B cell (primary cell): ENCODE measurements at regions of chr17 and their contacts with region 1.

Region 1: DNA sequence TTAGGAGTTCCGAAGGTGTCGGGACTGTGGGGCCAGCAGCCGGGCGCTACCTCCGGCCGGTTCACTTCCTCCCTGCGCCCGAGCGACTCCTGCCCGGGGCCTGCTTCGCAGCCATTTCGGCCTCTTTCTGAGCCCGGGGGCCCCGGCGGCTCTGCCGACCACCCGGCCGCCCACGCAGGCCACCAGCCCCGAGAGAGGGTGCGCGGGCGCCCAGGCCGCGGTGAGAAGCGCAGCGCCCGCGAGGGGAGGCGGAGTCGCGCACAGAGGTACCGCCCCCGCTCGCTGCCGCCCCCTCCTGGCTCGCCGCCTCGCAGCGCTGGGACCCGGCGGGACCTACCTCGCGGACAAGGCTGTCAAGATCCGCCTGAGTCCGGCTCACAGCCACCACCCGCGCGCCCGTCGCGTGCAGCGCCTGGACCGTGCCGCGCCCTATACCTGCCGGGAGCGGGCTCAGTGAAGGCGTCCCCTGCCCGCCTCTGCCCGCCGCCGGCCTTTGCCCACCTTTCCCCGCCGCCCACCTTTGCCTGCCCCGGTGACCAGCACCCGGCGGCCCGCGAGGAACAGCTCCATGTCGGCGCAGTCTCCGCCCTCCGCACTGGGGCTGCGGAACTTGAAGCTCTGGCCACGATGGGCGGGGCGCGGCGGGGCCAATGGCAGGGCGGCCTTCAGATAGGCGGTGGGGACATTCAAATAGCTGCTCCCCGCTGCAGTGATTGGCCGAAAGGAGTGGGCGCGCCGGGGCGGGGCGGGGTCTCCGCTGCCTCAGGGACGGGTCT is at the start of gene DCXR:
- DNase-seq: peak; percentile 98
- ATAC-seq: peak; percentile 91
- H3K4me3 ChIP-seq: peak within 1 kb of the TSS; percentile 34 to 76 (median 72)
- H3K4me3 Mint-ChIP-seq: peak within 1 kb of the TSS; percentile 90
- H3K27ac ChIP-seq: peak within 1 kb of the TSS; percentile 59 to 84
- H3K27ac Mint-ChIP-seq: peak within 1 kb of the TSS; percentile 99
- H3K4me1 ChIP-seq: peaks cover 18 to 20% of the 10 kb centered on the region in 2 donors
- H3K4me1 Mint-ChIP-seq: peaks cover 24% of the 10 kb centered on the region
- H3K27me3 ChIP-seq: peaks cover 0 to 4% (median 1%) of the 10 kb centered on the region in 4 experiments
- H3K27me3 Mint-ChIP-seq: no peaks in the 10 kb centered on the region
- CTCF ChIP-seq: peak; percentile 87
- total RNA-seq, gene DCXR: 63.9 and 70.7 TPM in 2 replicates

Region 2: DNA sequence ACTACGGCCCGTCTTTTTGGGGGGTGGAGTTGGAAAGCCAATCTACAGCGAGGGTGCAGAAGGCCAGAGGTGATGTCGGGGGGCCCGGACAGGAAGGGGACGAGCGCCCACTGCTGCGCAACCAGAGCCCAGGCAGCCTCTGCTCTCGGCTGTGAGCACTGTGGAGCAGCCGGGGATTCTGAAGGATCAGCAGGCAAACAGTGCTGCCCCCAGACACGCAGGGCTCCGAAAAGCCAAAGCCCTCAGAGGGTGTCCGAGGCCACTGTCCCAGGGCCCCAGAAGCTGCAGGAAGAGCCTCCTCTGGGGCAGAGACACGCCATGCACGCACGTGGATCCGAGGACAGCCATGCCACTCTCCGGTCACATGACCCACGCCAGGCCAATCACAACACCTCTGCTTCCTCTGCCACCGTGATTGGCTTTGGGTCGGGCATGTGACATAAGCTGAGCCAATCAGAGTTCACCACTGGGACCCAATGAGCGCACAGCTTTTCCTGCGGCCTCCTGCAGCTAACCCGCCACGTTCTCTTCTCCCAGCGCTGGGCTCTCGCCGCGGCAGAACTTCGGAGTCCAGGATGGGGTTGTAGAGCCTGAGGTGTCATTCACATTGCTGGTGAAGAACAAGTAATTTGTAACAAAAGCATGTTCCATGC is 565.4 kb before region 1 on chr17:
- CTCF ChIA-PET with region 1: no interaction called
- POLR2A ChIA-PET with region 1: no interaction called
- intact Hi-C with region 1: no loop called
- DNase-seq: no peak
- ATAC-seq: no peak
- H3K4me3 ChIP-seq: no peak overlapping the region
- H3K4me3 Mint-ChIP-seq: no peak overlapping the region
- H3K27ac ChIP-seq: no peak overlapping the region
- H3K27ac Mint-ChIP-seq: no peak overlapping the region
- H3K4me1 ChIP-seq: no peaks in the 10 kb centered on the region
- H3K4me1 Mint-ChIP-seq: no peaks in the 10 kb centered on the region
- H3K27me3 ChIP-seq: no peaks in the 10 kb centered on the region
- H3K27me3 Mint-ChIP-seq: no peaks in the 10 kb centered on the region
- CTCF ChIP-seq: no peak

Region 3: GRCh38 chr17:81977211-81978027 is 59.9 kb before region 1 on chr17 and contains the start of gene ASPSCR1:
- CTCF ChIA-PET with region 1: interaction called, 3 read pairs
- POLR2A ChIA-PET with region 1: interaction called, 3 read pairs
- intact Hi-C with region 1: loop called (anchors 1 kb)
- DNase-seq: peak; percentile 96
- ATAC-seq: peak; percentile 92
- H3K4me3 ChIP-seq: peak within 1 kb of the TSS; percentile 38 to 96 (median 79)
- H3K4me3 Mint-ChIP-seq: peak within 1 kb of the TSS; percentile 98
- H3K27ac ChIP-seq: peak within 1 kb of the TSS; percentile 63 to 91
- H3K27ac Mint-ChIP-seq: peak within 1 kb of the TSS; percentile 99
- H3K4me1 ChIP-seq: peaks cover 19 to 26% of the 10 kb centered on the region in 2 donors
- H3K4me1 Mint-ChIP-seq: peaks cover 29% of the 10 kb centered on the region
- H3K27me3 ChIP-seq: no peaks in the 10 kb centered on the region
- H3K27me3 Mint-ChIP-seq: peaks cover 3% of the 10 kb centered on the region
- CTCF ChIP-seq: no peak
- total RNA-seq, gene ASPSCR1: 46.7 and 50.4 TPM in 2 replicates

Region 4: DNA sequence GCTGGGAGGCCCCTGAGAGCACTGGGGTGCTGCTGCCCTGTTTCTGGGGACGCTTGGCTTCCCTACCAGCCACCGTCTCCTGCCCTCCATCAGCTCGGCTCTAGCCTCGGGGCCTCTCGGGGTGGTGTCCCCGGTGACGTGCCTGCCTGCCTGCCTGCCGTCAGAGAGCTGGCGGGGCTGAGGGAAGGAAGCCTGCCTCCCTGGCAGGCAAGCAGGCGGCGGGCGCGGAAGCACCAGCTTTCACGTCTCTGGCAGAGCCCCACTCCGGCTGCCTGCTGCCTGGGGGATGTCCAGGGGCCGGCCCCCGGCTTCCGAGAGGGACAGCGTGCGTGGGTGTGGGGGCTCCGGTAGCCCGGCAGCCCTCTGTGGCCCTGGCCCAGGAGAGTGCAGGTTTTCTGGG is 24.0 kb before region 1 on chr17:
- CTCF ChIA-PET with region 1: no interaction called
- POLR2A ChIA-PET with region 1: no interaction called
- intact Hi-C with region 1: no loop called
- DNase-seq: no peak
- ATAC-seq: no peak
- H3K4me3 ChIP-seq: no peak overlapping the region
- H3K4me3 Mint-ChIP-seq: no peak overlapping the region
- H3K27ac ChIP-seq: no peak overlapping the region
- H3K27ac Mint-ChIP-seq: no peak overlapping the region
- H3K4me1 ChIP-seq: no peaks in the 10 kb centered on the region
- H3K4me1 Mint-ChIP-seq: no peaks in the 10 kb centered on the region
- H3K27me3 ChIP-seq: no peaks in the 10 kb centered on the region
- H3K27me3 Mint-ChIP-seq: no peaks in the 10 kb centered on the region
- CTCF ChIP-seq: no peak

Region 5: DNA sequence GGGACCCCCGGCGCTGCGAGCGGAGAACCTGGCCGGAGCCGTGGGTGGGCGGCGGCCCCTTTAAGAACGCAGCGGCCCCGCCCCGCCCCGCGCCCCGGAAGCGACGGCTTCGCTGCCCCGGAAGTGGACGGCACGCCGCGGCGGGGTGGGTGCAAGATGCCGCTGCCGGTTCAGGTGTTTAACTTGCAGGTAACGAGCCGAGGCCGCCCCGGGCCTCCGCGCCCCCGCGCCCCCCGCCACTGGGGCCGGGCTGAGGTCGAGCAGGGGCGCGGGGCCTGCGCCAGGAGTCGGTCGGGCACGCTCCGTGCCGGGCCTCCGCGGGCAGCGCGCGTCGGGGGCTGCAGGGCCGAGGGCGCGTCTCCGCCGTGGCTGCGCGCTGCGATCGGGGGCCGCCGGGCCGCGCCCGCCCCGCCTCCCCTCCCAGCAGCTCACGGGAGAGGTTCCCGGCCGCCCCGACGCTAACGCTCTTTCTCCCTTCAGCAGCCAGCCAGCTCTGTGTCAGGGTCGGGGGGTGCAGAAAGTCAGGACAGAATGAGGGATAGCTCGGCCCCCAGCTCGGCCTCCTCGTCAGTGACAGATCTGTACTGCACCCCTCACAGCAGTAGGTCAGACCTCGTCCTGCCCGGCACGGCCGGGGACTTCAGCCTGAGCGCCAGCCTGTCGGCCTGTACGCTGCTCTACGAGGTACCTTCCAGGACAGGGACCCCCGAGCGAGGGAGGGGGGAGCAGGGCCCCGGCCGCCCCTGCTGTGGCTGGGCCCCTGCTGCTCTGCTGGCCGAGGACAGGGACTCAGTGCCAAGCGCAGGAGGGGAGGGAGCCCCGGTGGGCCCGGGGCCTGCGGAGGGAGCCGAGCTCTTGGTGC is 14.7 kb after region 1 on chr17 and contains the starts of genes GPS1 and RFNG:
- CTCF ChIA-PET with region 1: interaction called, 6 read pairs
- POLR2A ChIA-PET with region 1: interaction called, 6 read pairs
- intact Hi-C with region 1: loop called (anchors 1 kb)
- DNase-seq: peak; percentile 82
- ATAC-seq: peak; percentile 88
- H3K4me3 ChIP-seq: peak within 1 kb of the TSS; percentile 54 to 88 (median 63)
- H3K4me3 Mint-ChIP-seq: peak within 1 kb of the TSS; percentile 84
- H3K27ac ChIP-seq: peak within 1 kb of the TSS in 1 of 2 donors; percentile 30
- H3K27ac Mint-ChIP-seq: peak within 1 kb of the TSS; percentile 86
- H3K4me1 ChIP-seq: peaks cover 20 to 34% of the 10 kb centered on the region in 2 donors
- H3K4me1 Mint-ChIP-seq: peaks cover 14% of the 10 kb centered on the region
- H3K27me3 ChIP-seq: no peaks in the 10 kb centered on the region
- H3K27me3 Mint-ChIP-seq: no peaks in the 10 kb centered on the region
- CTCF ChIP-seq: no peak
- total RNA-seq, gene GPS1: 79.5 and 80.5 TPM in 2 replicates
- total RNA-seq, gene RFNG: 30.1 TPM in 2 replicates

Region 6: DNA sequence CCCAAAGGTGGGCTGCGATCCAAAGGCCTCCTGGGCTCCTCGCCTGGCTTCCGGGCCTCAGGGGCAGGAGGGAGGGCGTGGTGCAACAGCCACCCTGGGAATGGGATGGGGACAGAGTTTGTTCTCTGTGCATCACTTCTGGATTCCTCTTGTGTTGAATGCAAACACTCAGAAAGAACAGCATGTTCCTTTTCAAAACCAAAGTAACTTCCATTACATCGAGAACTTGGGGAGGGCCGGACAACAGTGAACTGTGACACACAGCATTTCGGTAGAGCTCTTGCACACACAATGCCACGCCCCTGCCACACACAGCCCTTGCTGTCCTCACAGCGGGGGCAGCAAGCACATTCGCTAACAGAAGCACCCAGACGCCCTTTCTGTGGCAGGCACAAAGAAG is 96.8 kb after region 1 on chr17:
- CTCF ChIA-PET with region 1: no interaction called
- POLR2A ChIA-PET with region 1: no interaction called
- intact Hi-C with region 1: no loop called
- DNase-seq: no peak
- ATAC-seq: no peak
- H3K4me3 ChIP-seq: no peak overlapping the region
- H3K4me3 Mint-ChIP-seq: no peak overlapping the region
- H3K27ac ChIP-seq: no peak overlapping the region
- H3K27ac Mint-ChIP-seq: no peak overlapping the region
- H3K4me1 ChIP-seq: no peaks in the 10 kb centered on the region
- H3K4me1 Mint-ChIP-seq: peaks cover 8% of the 10 kb centered on the region
- H3K27me3 ChIP-seq: no peaks in the 10 kb centered on the region
- H3K27me3 Mint-ChIP-seq: no peaks in the 10 kb centered on the region
- CTCF ChIP-seq: no peak